ENCODE measurements at regions of chr2 and their contacts with region 1.

Region 1: GRCh38 chr2:159286709-159287441 is 372 bp upstream of the WDSUB1 start:
- DNase-seq: peak; percentile 93 to 100 (median 97)
- ATAC-seq: peak; percentile 98
- H3K4me3 ChIP-seq: peak overlapping the region; percentile 88
- H3K4me3 Mint-ChIP-seq: peak overlapping the region; percentile 90
- H3K27ac ChIP-seq: peak overlapping the region in 1 of 2 donors; percentile 69
- H3K27ac Mint-ChIP-seq: peak overlapping the region; percentile 77
- H3K4me1 ChIP-seq: peaks cover 24% of the 10 kb centered on the region
- H3K4me1 Mint-ChIP-seq: peaks cover 46% of the 10 kb centered on the region
- H3K27me3 ChIP-seq: no peaks in the 10 kb centered on the region
- H3K27me3 Mint-ChIP-seq: no peaks in the 10 kb centered on the region
- CTCF ChIP-seq: no peak

Region 2: GRCh38 chr2:159201360-159202063 is 85.4 kb before region 1 on chr2:
- CTCF ChIA-PET with region 1: no interaction called
- POLR2A ChIA-PET with region 1: no interaction called
- intact Hi-C with region 1: no loop called
- DNase-seq: peak in 4 of 14 experiments; percentile 23 to 75 (median 65)
- ATAC-seq: peak; percentile 85
- H3K4me3 ChIP-seq: no peak overlapping the region
- H3K4me3 Mint-ChIP-seq: no peak overlapping the region
- H3K27ac ChIP-seq: no peak overlapping the region
- H3K27ac Mint-ChIP-seq: peak overlapping the region; percentile 74
- H3K4me1 ChIP-seq: peaks cover 15% of the 10 kb centered on the region
- H3K4me1 Mint-ChIP-seq: peaks cover 22% of the 10 kb centered on the region
- H3K27me3 ChIP-seq: no peaks in the 10 kb centered on the region
- H3K27me3 Mint-ChIP-seq: no peaks in the 10 kb centered on the region
- CTCF ChIP-seq: no peak

Region 3: GRCh38 chr2:159904127-159904958 is 617.5 kb after region 1 on chr2:
- CTCF ChIA-PET with region 1: no interaction called
- POLR2A ChIA-PET with region 1: interaction called, 3 read pairs
- intact Hi-C with region 1: loop called in 1 of 2 experiments (anchors 2 kb)
- DNase-seq: peak; percentile 64 to 91 (median 80)
- ATAC-seq: peak; percentile 81
- H3K4me3 ChIP-seq: peak within 1 kb of the TSS; percentile 97
- H3K4me3 Mint-ChIP-seq: peak within 1 kb of the TSS; percentile 99
- H3K27ac ChIP-seq: peak within 1 kb of the TSS; percentile 73 to 91
- H3K27ac Mint-ChIP-seq: peak within 1 kb of the TSS; percentile 93
- H3K4me1 ChIP-seq: peaks cover 31% of the 10 kb centered on the region
- H3K4me1 Mint-ChIP-seq: peaks cover 39% of the 10 kb centered on the region
- H3K27me3 ChIP-seq: no peaks in the 10 kb centered on the region
- H3K27me3 Mint-ChIP-seq: no peaks in the 10 kb centered on the region
- CTCF ChIP-seq: no peak

Measured in CD4-positive, alpha-beta T cell (primary cell).